PC-9 (cell line): ENCODE measurements at regions of chr1 and their contacts with region 1.

Region 1: GRCh38 chr1:8903908-8904650 is 25.6 kb upstream of the ENO1 start:
- DNase-seq: peak; percentile 91 to 92
- H3K4me3 ChIP-seq: no peak overlapping the region
- H3K27ac ChIP-seq: peak overlapping the region; percentile 89
- H3K4me1 ChIP-seq: peaks cover 33% of the 10 kb centered on the region
- H3K27me3 ChIP-seq: no peaks in the 10 kb centered on the region
- CTCF ChIP-seq: no peak

Region 2: GRCh38 chr1:8873506-8874229 is 30.4 kb before region 1 on chr1:
- CTCF ChIA-PET with region 1: no interaction called
- POLR2A ChIA-PET with region 1: interaction called, 4 read pairs
- intact Hi-C with region 1: loop called (anchors 1 kb)
- DNase-seq: peak; percentile 91 to 95
- H3K4me3 ChIP-seq: peak overlapping the region; percentile 91; the same call in 1 of the 2 replicates
- H3K27ac ChIP-seq: peak overlapping the region; percentile 96
- H3K4me1 ChIP-seq: peaks cover 46% of the 10 kb centered on the region
- H3K27me3 ChIP-seq: no peaks in the 10 kb centered on the region
- CTCF ChIP-seq: no peak

Region 3: DNA sequence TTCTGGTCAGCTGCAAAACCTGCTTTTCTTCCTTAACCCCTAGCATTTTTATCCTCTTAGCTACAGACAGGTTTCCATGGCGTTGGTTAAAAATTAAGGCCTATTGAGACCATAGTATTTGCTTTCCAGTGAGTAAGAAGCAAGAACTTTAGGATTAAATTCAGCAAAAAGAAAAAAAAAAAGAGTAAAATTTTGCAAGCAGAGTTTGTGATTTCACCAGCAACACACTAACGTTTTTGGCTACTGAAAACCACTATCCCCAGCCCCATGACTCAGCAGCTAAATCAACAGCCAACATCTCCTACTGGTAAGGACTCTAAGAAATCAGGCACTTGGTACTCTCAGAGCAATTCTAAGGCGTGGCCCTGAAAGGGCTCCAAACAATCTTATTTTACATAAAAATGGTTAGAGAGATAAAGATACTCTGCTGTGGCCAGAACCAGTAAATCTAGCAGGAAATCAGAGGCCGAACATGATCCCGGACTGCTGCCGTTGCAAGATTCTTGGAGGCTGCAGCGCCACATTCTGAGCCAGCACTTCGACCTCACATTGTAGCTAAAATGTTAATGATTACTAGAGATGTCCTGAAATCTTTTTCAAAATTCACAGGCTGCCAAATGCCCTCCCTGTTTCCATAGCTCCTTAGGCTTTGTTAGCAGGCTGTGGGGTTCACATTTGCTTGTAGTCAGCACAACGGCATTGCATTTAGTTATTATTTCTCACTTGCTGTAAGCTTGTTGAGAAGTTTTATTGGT is 24.0 kb before region 1 on chr1:
- CTCF ChIA-PET with region 1: no interaction called
- POLR2A ChIA-PET with region 1: no interaction called
- intact Hi-C with region 1: loop called (anchors 1 kb)
- DNase-seq: peak; percentile 61 to 87
- H3K4me3 ChIP-seq: peak overlapping the region; percentile 91; the same call in 1 of the 2 replicates
- H3K27ac ChIP-seq: peak overlapping the region; percentile 96
- H3K4me1 ChIP-seq: peaks cover 30% of the 10 kb centered on the region
- H3K27me3 ChIP-seq: no peaks in the 10 kb centered on the region
- CTCF ChIP-seq: no peak